ENCODE measurements at regions of chr17 and their contacts with region 1.

Region 1: GRCh38 chr17:7336240-7337175 is at the start of gene ACAP1:
- DNase-seq: peak; percentile 83
- ATAC-seq: peak; percentile 96
- H3K4me3 ChIP-seq: peak within 1 kb of the TSS; percentile 57 to 93 (median 87)
- H3K4me3 Mint-ChIP-seq: peak within 1 kb of the TSS; percentile 89
- H3K27ac ChIP-seq: peak within 1 kb of the TSS; percentile 67 to 79
- H3K27ac Mint-ChIP-seq: peak within 1 kb of the TSS; percentile 96
- H3K4me1 ChIP-seq: peaks cover 25 to 64% of the 10 kb centered on the region in 2 donors
- H3K4me1 Mint-ChIP-seq: peaks cover 47% of the 10 kb centered on the region
- H3K27me3 ChIP-seq: no peaks in the 10 kb centered on the region
- H3K27me3 Mint-ChIP-seq: no peaks in the 10 kb centered on the region
- CTCF ChIP-seq: no peak
- total RNA-seq, gene ACAP1: 371 and 392 TPM in 2 replicates

Region 2: DNA sequence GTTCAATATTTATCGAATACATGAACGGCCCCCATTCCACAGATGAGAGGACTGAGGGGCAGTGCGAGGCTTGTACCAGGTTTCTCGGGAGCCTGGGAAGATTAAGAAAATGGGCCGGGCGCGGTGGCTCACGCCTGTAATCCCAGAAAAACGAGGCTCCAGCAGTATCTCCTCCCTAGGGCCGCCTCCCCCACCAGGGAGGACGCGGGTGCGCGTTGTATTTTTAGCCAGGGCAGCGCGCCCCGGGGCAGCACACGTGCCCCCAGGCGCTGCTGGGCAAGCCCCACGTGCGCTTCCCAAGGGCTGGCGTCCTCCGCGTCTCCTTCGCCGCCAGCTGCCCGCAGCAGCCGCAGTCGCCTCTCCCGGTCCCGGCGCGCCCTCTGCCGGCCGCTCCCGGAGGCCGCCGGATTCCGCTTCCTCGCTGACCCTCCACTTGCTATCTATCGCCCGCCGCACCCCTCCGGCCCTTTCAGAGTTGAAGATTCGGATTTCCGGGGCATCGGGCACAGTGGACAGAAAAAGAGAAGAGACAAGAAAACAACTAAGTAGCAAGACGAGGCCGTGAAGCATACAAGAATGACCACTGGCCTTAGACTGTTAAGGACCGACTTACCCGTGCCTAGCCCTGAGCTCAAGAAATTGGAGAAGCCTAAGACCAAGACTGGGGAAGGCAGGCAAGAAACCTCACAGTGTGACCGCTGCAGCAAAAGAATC is 40.2 kb before region 1 on chr17:
- CTCF ChIA-PET with region 1: interaction called, 17 read pairs
- POLR2A ChIA-PET with region 1: no interaction called
- intact Hi-C with region 1: no loop called
- DNase-seq: peak; percentile 84
- ATAC-seq: peak; percentile 58
- H3K4me3 ChIP-seq: peak overlapping the region in 2 of 5 experiments; percentile 12 to 14
- H3K4me3 Mint-ChIP-seq: peak overlapping the region; percentile 83
- H3K27ac ChIP-seq: no peak overlapping the region
- H3K27ac Mint-ChIP-seq: peak overlapping the region; percentile 47
- H3K4me1 ChIP-seq: peaks cover 28 to 30% of the 10 kb centered on the region in 2 donors
- H3K4me1 Mint-ChIP-seq: peaks cover 22% of the 10 kb centered on the region
- H3K27me3 ChIP-seq: peaks cover 0 to 52% (median 14%) of the 10 kb centered on the region in 4 experiments
- H3K27me3 Mint-ChIP-seq: peaks cover 36% of the 10 kb centered on the region
- CTCF ChIP-seq: peak; percentile 93

Region 3: DNA sequence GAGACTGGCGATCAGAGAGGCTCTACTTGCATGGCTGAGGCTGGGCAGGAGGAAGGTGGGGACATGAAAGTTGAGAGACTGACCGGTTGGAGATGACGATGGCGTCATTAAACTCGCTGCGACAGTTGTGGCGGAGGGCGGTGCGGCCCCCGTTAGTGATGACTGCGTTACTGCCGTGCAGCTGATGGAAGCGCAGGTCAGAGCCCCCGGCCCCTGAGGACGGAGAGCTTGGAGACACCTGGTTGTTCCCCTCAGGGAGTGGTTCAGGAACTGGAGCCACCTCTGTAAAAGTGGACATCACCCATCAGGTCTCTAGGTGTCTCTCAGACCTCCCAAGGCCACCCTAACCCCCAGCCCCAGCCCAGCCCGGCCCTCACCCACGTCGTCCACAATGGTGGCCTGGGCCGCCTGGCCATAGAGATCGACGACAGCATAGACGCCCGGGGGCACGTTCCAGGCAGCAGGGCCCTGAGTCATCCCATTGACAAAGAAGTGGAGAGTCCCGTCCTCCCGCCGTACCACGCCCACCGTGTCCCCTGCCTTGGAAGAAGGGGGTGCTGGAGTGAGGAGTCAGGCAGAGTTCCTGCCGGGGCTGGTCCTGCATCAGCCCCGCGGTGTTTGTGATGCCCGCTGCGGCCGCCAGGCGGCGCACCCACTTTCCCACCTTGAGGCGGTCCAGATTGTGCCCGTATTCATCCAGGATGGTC is 12.6 kb before region 1 on chr17:
- CTCF ChIA-PET with region 1: interaction called, 47 read pairs
- POLR2A ChIA-PET with region 1: interaction called, 6 read pairs
- intact Hi-C with region 1: no loop called
- DNase-seq: peak; percentile 75
- ATAC-seq: peak; percentile 37
- H3K4me3 ChIP-seq: no peak overlapping the region
- H3K4me3 Mint-ChIP-seq: no peak overlapping the region
- H3K27ac ChIP-seq: no peak overlapping the region
- H3K27ac Mint-ChIP-seq: peak overlapping the region; percentile 20
- H3K4me1 ChIP-seq: peaks cover 7 to 13% of the 10 kb centered on the region in 2 donors
- H3K4me1 Mint-ChIP-seq: peaks cover 17% of the 10 kb centered on the region
- H3K27me3 ChIP-seq: no peaks in the 10 kb centered on the region
- H3K27me3 Mint-ChIP-seq: no peaks in the 10 kb centered on the region
- CTCF ChIP-seq: peak; percentile 91

Region 4: DNA sequence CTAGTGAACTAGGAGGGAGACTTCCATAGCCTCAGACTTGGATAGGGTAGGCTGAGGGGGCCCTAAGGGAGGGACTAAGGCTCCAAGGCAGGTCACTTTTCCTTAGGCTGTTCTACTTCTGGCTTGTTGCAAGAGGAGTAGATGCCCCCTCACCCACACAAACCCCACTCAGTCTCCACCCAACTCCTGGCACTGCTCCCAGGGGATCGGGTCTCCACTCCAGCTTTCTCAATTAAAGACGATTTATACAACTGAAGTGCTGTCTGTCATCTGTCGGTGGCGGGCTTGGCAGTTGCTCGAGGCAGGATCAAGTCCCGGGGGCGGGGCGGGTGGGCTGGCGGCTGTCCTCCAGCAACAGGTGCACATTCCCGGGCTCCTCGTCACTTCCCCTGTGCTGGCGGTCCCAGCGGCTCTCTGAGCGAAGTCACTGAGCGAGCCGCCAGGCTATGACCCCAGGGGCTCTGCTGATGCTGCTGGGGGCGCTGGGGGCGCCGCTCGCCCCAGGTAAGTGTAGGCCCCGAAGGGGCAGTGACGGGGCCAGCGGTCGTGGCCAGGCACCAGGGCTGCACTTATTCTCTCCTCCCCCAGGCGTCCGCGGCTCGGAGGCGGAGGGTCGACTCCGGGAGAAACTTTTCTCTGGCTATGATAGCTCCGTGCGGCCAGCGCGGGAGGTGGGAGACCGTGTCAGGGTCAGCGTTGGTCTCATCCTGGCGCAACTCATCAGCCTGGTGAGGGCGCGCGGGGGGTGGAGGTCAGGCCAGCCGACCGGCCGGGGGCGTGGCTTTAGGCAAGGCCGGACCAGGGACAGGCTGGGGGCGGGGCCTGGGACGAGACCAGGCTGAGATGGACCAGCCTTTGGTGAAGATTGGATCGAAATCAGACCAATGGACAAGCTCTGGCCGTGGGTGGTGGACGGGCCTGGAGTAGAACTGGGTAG is 108.4 kb after region 1 on chr17 and contains the start of gene CHRNB1:
- CTCF ChIA-PET with region 1: no interaction called
- POLR2A ChIA-PET with region 1: no interaction called
- intact Hi-C with region 1: no loop called
- DNase-seq: peak; percentile 58
- ATAC-seq: peak; percentile 46
- H3K4me3 ChIP-seq: peak within 1 kb of the TSS in 4 of 5 experiments; percentile 31 to 53 (median 42)
- H3K4me3 Mint-ChIP-seq: peak within 1 kb of the TSS; percentile 84
- H3K27ac ChIP-seq: no peak within 1 kb of the TSS
- H3K27ac Mint-ChIP-seq: peak within 1 kb of the TSS; percentile 15
- H3K4me1 ChIP-seq: peaks cover 33 to 40% of the 10 kb centered on the region in 2 donors
- H3K4me1 Mint-ChIP-seq: peaks cover 29% of the 10 kb centered on the region
- H3K27me3 ChIP-seq: peaks cover 0 to 78% (median 51%) of the 10 kb centered on the region in 4 experiments
- H3K27me3 Mint-ChIP-seq: peaks cover 71% of the 10 kb centered on the region
- CTCF ChIP-seq: no peak
- total RNA-seq, gene CHRNB1: 6.2 and 6.6 TPM in 2 replicates

Region 5: GRCh38 chr17:7548585-7549400 is 212.3 kb after region 1 on chr17 and contains the start of gene TNFSF12:
- CTCF ChIA-PET with region 1: no interaction called
- POLR2A ChIA-PET with region 1: interaction called, 13 read pairs
- intact Hi-C with region 1: no loop called
- DNase-seq: peak; percentile 61
- ATAC-seq: peak; percentile 52
- H3K4me3 ChIP-seq: peak within 1 kb of the TSS; percentile 59 to 73 (median 72)
- H3K4me3 Mint-ChIP-seq: peak within 1 kb of the TSS; percentile 85
- H3K27ac ChIP-seq: peak within 1 kb of the TSS; percentile 54 to 92
- H3K27ac Mint-ChIP-seq: peak within 1 kb of the TSS; percentile 91
- H3K4me1 ChIP-seq: peaks cover 36 to 53% of the 10 kb centered on the region in 2 donors
- H3K4me1 Mint-ChIP-seq: peaks cover 42% of the 10 kb centered on the region
- H3K27me3 ChIP-seq: no peaks in the 10 kb centered on the region
- H3K27me3 Mint-ChIP-seq: no peaks in the 10 kb centered on the region
- CTCF ChIP-seq: no peak
- total RNA-seq, gene TNFSF12: 40.6 and 44.5 TPM in 2 replicates

Region 6: DNA sequence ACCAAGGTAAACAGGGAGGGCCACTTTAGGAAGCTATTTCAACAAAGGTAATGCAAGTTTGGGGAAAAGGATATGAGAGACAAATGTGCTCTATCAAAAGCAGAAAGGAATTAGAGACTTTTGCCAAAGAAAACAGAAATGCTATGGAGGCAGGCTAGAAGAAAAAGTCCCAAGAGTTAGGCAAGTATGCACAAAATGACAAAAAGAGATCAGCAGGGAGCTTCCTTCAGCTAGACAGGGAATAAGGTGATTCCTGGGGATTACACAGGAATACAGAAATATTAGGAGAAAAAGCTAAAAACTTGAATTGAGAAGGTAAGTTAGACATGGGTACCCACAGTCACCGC is 275.8 kb after region 1 on chr17:
- CTCF ChIA-PET with region 1: no interaction called
- POLR2A ChIA-PET with region 1: no interaction called
- intact Hi-C with region 1: no loop called
- DNase-seq: no peak
- ATAC-seq: no peak
- H3K4me3 ChIP-seq: no peak overlapping the region
- H3K4me3 Mint-ChIP-seq: peak overlapping the region; percentile 42
- H3K27ac ChIP-seq: no peak overlapping the region
- H3K27ac Mint-ChIP-seq: no peak overlapping the region
- H3K4me1 ChIP-seq: peaks cover 12 to 26% of the 10 kb centered on the region in 2 donors
- H3K4me1 Mint-ChIP-seq: peaks cover 26% of the 10 kb centered on the region
- H3K27me3 ChIP-seq: no peaks in the 10 kb centered on the region
- H3K27me3 Mint-ChIP-seq: no peaks in the 10 kb centered on the region
- CTCF ChIP-seq: no peak